Ascending aorta (tissue), 2 donors: ENCODE measurements at regions of chr1 and their contacts with region 1.

Region 1: GRCh38 chr1:234610348-234611152 is 572 bp upstream of the IRF2BP2 start:
- DNase-seq: peak; percentile 90 to 98
- H3K4me3 ChIP-seq: peak overlapping the region; percentile 66 to 74
- H3K27ac ChIP-seq: peak overlapping the region; percentile 94 to 99
- H3K4me1 ChIP-seq: peaks cover 15 to 31% of the 10 kb centered on the region in 2 donors
- H3K27me3 ChIP-seq: no peaks in the 10 kb centered on the region
- CTCF ChIP-seq: no peak

Region 2: GRCh38 chr1:234772345-234773147 is 162.0 kb after region 1 on chr1:
- intact Hi-C with region 1: loop called (anchors 5 kb)
- DNase-seq: peak; percentile 83 to 94
- H3K4me3 ChIP-seq: peak overlapping the region in 1 of 2 donors; percentile 32
- H3K27ac ChIP-seq: peak overlapping the region; percentile 46 to 54
- H3K4me1 ChIP-seq: peaks cover 0 to 12% of the 10 kb centered on the region in 2 donors
- H3K27me3 ChIP-seq: no peaks in the 10 kb centered on the region
- CTCF ChIP-seq: no peak

Region 3: GRCh38 chr1:234862944-234863515 is 252.5 kb after region 1 on chr1:
- intact Hi-C with region 1: loop called (anchors 5 kb)
- DNase-seq: peak; percentile 48 to 88
- H3K4me3 ChIP-seq: peak overlapping the region in 1 of 2 donors; percentile 29
- H3K27ac ChIP-seq: peak overlapping the region; percentile 80 to 89
- H3K4me1 ChIP-seq: peaks cover 0 to 33% of the 10 kb centered on the region in 2 donors
- H3K27me3 ChIP-seq: no peaks in the 10 kb centered on the region
- CTCF ChIP-seq: no peak

Region 4: DNA sequence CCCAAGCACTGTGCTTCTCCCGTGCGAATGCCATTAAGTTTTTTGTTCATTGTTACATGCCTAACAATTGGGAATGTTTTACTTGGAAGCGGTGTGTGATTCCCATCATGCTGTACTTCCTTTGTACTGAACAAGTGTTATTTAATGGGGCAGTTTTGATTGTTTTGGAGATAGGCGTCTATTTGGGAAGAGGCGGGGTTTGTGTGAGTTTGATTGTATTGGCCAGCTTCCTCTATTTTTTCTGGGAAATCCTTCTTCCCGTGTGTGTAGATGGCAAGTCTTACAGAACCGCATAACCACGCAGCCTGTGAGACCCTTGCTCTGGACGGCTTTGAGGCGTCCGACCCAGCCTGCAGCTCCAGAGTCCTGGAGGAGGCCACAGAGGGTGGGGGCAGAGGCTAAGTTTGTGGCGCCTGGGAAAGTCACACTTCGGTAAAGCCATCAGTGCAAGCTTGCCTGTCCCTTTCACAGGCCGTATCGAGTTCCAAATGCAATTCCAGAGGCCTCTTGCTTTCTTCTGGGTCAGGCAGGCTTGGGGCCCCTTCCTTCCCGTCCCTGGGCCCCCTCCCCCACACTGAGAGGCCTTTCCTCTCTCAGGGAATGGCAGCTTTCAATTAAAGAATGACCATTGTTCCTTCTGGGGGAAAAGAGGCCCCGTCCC is 307.8 kb after region 1 on chr1:
- intact Hi-C with region 1: loop called (anchors 2 kb)
- DNase-seq: peak in 1 of 2 donors; percentile 75
- H3K4me3 ChIP-seq: no peak overlapping the region
- H3K27ac ChIP-seq: peak overlapping the region; percentile 86 to 94
- H3K4me1 ChIP-seq: peaks cover 28 to 77% of the 10 kb centered on the region in 2 donors
- H3K27me3 ChIP-seq: no peaks in the 10 kb centered on the region
- CTCF ChIP-seq: no peak

Region 5: DNA sequence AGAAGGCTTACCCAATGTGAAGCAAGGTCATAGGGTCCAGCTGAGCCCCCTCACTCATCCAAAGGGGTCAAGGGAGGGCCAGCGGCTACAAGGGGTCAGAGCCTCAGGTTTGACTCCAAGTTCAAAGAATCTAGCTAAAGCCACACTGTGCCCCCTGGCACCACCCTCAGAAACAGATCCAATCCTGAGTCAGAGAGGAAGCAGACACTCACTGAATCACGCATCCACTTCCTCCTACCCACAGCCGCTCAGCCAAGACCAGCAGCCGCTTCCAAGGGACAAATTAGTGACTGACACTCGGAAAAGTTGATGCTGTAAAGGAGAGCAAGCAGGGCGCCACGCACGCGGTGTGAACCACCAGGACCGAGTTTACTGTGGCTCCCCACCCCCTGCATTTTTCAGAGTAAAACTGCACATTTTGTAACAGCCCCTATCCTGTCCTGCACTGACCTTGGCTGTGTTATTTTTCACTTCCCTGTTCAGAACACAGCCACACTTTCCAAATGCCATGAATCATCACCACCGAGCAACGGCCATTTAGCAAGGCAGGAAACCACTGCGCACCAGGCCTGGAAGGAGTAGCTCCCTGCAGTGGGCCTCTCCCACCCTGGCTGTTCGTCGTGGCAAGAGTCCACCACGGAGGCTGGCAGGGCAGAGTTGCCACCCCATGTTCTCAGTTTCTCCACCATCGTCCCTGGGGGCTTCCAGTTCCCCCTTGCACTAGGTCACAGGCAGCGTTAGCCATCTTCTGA is 370.3 kb after region 1 on chr1:
- intact Hi-C with region 1: loop called (anchors 5 kb)
- DNase-seq: peak; percentile 91 to 98
- H3K4me3 ChIP-seq: peak overlapping the region in 1 of 2 donors; percentile 44
- H3K27ac ChIP-seq: peak overlapping the region; percentile 98 to 99
- H3K4me1 ChIP-seq: peaks cover 24 to 65% of the 10 kb centered on the region in 2 donors
- H3K27me3 ChIP-seq: no peaks in the 10 kb centered on the region
- CTCF ChIP-seq: no peak

Region 6: DNA sequence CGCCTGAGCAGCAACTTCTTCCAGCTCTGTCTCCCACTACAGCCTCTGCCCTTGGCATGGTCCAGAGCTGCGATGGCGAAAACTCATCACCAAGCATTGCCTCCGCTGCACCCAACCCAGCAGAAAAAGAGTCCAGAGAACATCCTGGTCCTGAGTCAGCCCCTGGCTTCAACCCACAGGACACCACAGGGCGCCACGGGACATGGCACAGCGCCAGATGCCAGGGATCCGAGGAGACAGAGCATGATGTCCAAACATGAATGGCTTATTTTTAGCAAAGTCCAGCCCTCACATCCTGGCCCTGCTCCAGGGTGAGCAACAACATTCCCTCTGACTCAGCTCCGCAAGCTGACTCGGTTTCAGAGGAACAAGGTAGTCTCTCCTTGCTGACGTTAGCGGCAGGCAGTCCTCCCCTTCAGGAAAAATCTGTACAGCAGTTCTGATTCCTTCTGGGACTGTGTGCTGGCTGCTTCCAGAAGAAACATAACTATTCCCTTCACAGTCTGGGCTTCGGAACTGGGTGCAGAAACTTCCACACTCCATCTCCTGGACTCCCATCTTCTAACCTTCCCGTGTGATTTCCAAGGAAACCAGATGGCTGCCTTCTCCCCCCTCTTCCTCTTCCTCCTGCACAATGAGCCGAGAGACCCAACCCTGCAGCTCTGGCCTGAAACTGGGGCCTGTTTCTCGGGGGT is 386.8 kb after region 1 on chr1:
- intact Hi-C with region 1: loop called (anchors 2 kb)
- DNase-seq: peak; percentile 99 to 100
- H3K4me3 ChIP-seq: peak overlapping the region; percentile 28 to 29
- H3K27ac ChIP-seq: peak overlapping the region; percentile 89 to 94
- H3K4me1 ChIP-seq: peaks cover 3 to 28% of the 10 kb centered on the region in 2 donors
- H3K27me3 ChIP-seq: no peaks in the 10 kb centered on the region
- CTCF ChIP-seq: no peak